K562 (cell line): ENCODE measurements at regions of chr2 and their contacts with region 1.

Region 1: DNA sequence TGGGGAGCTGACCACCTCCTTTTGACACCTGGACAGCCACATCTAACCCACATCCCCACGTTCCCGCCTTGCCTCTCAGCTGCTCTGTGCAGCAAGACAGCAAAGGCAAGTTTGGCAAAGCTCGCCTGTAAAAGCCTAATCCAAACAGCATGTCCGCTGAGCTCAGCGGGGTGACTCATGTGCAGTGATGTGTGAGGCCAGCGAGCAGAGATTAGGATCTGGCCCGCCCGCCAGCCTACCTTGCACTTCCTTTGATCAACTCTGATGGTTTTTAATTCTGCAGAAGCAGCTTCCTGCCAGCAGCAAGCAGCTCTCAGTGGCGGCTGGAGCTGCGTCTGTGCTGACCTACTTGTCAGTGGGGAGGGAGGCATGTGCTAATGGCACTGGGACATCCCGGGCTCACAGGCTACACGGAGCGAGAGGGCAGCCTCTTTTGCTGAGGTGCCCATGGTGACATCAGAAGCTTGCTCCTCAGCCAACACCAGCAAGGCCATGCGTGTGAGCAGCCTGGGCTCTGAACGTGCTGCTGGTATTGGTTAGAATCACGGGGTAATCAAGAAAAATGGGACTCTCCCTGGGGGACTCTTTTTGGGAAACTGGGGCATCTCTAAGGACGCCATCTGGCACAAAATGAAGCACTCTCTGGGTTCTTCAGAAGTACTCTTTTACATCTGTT is 36.0 kb upstream of the EML4 start:
- DNase-seq: peak; percentile 50 to 78 (median 62)
- ATAC-seq: peak; percentile 91
- H3K4me3 ChIP-seq: no peak overlapping the region
- H3K27ac ChIP-seq: no peak overlapping the region
- H3K4me1 ChIP-seq: peaks cover 7 to 8% of the 10 kb centered on the region in 2 experiments
- H3K27me3 ChIP-seq: peaks cover 7 to 17% of the 10 kb centered on the region in 2 experiments; a peak in 3 of 5 replicates
- CTCF ChIP-seq: no peak
- EP300 ChIP-seq: 0 out of 2 replicates have a peak, but pooled peaks have one; percentile 15
- POLR2A ChIP-seq: no peak
- RAD21 ChIP-seq: no peak

Region 2: GRCh38 chr2:42117923-42118753 is 15.0 kb before region 1 on chr2:
- CTCF ChIA-PET with region 1: no interaction called
- POLR2A ChIA-PET with region 1: no interaction called
- in situ Hi-C with region 1: no loop called
- intact Hi-C with region 1: no loop called
- DNase-seq: no peak
- ATAC-seq: no peak; the same call in 2 of the 3 replicates
- H3K4me3 ChIP-seq: no peak overlapping the region
- H3K27ac ChIP-seq: no peak overlapping the region
- H3K4me1 ChIP-seq: peaks cover 0 to 6% of the 10 kb centered on the region in 2 experiments; a peak in 1 of 5 replicates
- H3K27me3 ChIP-seq: peaks cover 6 to 14% of the 10 kb centered on the region in 2 experiments
- CTCF ChIP-seq: no peak
- EP300 ChIP-seq: 0 out of 2 replicates have a peak, but pooled peaks have one; percentile 22
- POLR2A ChIP-seq: no peak
- RAD21 ChIP-seq: 0 out of 4 replicates have a peak, but pooled peaks of 1 of the 2 experiments have one; percentile 7

Region 3: DNA sequence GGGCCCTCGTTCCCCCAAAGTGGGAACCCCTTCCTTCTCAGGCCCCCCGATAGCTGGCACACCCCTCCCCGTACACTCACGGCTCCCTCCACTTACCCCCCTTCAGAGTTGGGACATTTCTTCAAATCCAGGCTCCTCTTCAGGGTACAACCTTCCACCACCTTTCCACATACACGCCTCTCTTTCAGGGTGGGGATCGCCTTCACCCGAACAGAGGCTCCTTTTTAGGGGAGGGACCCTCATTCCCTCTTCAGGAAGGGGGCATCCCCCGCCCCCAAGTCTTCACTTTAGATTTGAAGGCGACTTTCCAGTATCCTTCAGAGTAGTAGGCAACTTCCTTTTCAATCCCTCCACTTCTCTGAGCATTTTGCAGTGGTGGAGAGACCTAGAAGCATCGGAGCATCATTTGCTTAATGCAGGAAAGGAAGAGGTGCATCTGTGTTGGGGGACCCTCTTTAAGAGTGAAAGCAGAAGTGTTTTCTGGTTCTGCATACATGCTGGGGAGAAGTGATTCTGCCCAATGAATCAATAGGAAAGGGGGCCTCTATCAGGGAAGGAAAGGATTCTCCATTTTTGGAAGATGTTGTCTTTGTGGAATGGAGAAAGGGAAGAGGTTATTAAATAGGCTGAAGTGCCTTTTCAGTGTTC is 36.9 kb after region 1 on chr2:
- CTCF ChIA-PET with region 1: no interaction called
- POLR2A ChIA-PET with region 1: interaction called, 3 read pairs
- in situ Hi-C with region 1: no loop called
- intact Hi-C with region 1: loop called (anchors 5 kb)
- DNase-seq: peak in 1 of 4 experiments; percentile 9
- ATAC-seq: peak; percentile 53
- H3K4me3 ChIP-seq: peak overlapping the region; percentile 62
- H3K27ac ChIP-seq: peak overlapping the region; percentile 79
- H3K4me1 ChIP-seq: peaks cover 12 to 22% of the 10 kb centered on the region in 2 experiments; a peak in 4 of 5 replicates
- H3K27me3 ChIP-seq: no peaks in the 10 kb centered on the region
- CTCF ChIP-seq: no peak
- EP300 ChIP-seq: no peak
- POLR2A ChIP-seq: no peak
- RAD21 ChIP-seq: no peak

Region 4: GRCh38 chr2:42196403-42197267 is 63.5 kb after region 1 on chr2:
- CTCF ChIA-PET with region 1: no interaction called
- POLR2A ChIA-PET with region 1: no interaction called
- in situ Hi-C with region 1: no loop called
- intact Hi-C with region 1: no loop called
- DNase-seq: peak; percentile 43 to 73 (median 60)
- ATAC-seq: peak; percentile 98
- H3K4me3 ChIP-seq: no peak overlapping the region
- H3K27ac ChIP-seq: peak overlapping the region; percentile 46; the same call in 1 of the 3 replicates
- H3K4me1 ChIP-seq: peaks cover 4 to 10% of the 10 kb centered on the region in 2 experiments; a peak in 3 of 5 replicates
- H3K27me3 ChIP-seq: no peaks in the 10 kb centered on the region
- CTCF ChIP-seq: peak; percentile 66 to 99 (median 98)
- EP300 ChIP-seq: peak; percentile 83; the same call in 1 of the 2 replicates
- POLR2A ChIP-seq: no peak
- RAD21 ChIP-seq: peak; percentile 92